HepG2 (cell line): ENCODE measurements at regions of chr6 and their contacts with region 1.

Region 1: GRCh38 chr6:30717042-30717844 is at the start of gene MDC1:
- DNase-seq: peak; percentile 100
- ATAC-seq: peak; percentile 88
- H3K4me3 ChIP-seq: peak within 1 kb of the TSS; percentile 68 to 84 (median 76)
- H3K27ac ChIP-seq: peak within 1 kb of the TSS; percentile 94
- H3K4me1 ChIP-seq: peaks cover 37% of the 10 kb centered on the region
- H3K27me3 ChIP-seq: no peaks in the 10 kb centered on the region; a peak in 1 of 5 replicates
- CTCF ChIP-seq: peak; percentile 69
- EP300 ChIP-seq: peak; percentile 77 to 82; a peak in 3 of 4 replicates
- POLR2A ChIP-seq: peak; percentile 91 to 96
- RAD21 ChIP-seq: peak; percentile 39; the same call in 1 of the 2 replicates
- total RNA-seq, gene MDC1: 8.4 and 20.5 TPM in 2 replicates

Region 2: DNA sequence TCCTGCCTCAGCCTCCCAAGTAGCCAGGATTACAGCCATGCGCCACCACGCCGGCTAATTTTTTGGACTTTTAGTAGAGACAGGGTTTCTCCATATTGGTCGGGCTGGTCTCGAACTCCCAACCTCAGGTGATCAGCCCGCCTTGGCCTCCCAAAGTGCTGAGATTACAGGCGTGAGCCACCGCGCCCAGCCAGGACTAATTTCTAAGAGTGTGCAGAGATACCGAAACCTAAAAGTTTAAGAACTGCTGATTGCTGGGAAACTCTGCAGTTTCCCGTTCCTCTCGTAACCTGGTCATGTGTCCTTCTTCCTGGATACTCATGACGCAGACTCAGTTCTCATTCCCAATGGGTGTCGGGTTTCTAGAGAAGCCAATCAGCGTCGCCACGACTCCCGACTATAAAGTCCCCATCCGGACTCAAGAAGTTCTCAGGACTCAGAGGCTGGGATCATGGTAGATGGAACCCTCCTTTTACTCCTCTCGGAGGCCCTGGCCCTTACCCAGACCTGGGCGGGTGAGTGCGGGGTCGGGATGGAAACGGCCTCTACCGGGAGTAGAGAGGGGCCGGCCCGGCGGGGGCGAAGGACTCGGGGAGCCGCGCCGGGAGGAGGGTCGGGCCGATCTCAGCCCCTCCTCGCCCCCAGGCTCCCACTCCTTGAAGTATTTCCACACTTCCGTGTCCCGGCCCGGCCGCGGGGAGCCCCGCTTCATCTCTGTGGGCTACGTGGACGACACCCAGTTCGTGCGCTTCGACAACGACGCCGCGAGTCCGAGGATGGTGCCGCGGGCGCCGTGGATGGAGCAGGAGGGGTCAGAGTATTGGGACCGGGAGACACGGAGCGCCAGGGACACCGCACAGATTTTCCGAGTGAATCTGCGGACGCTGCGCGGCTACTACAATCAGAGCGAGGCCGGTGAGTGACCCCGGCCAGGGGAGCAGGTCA is 227.9 kb before region 1 on chr6 and contains the start of gene HLA-E:
- CTCF ChIA-PET with region 1: no interaction called
- POLR2A ChIA-PET with region 1: no interaction called
- in situ Hi-C with region 1: loop called (anchors 10 kb)
- intact Hi-C with region 1: loop called (anchors 5 kb)
- DNase-seq: peak; percentile 99
- ATAC-seq: peak; percentile 97
- H3K4me3 ChIP-seq: peak within 1 kb of the TSS; percentile 74 to 97 (median 80)
- H3K27ac ChIP-seq: peak within 1 kb of the TSS; percentile 41
- H3K4me1 ChIP-seq: peaks cover 25% of the 10 kb centered on the region
- H3K27me3 ChIP-seq: no peaks in the 10 kb centered on the region
- CTCF ChIP-seq: peak; percentile 13; the same call in 1 of the 2 replicates
- EP300 ChIP-seq: no peak
- POLR2A ChIP-seq: peak; percentile 93 to 97
- RAD21 ChIP-seq: 0 out of 2 replicates have a peak, but pooled peaks have one; percentile 10
- total RNA-seq, gene HLA-E: 21.2 and 45.2 TPM in 2 replicates

Region 3: GRCh38 chr6:30616811-30617564 is 100.3 kb before region 1 on chr6 and contains the start of gene PPP1R10:
- CTCF ChIA-PET with region 1: no interaction called
- POLR2A ChIA-PET with region 1: interaction called, 25 read pairs
- in situ Hi-C with region 1: no loop called
- intact Hi-C with region 1: loop called (anchors 2 kb)
- DNase-seq: peak; percentile 100
- ATAC-seq: peak; percentile 83
- H3K4me3 ChIP-seq: peak within 1 kb of the TSS; percentile 87 to 97 (median 89)
- H3K27ac ChIP-seq: peak within 1 kb of the TSS; percentile 98
- H3K4me1 ChIP-seq: peaks cover 35% of the 10 kb centered on the region
- H3K27me3 ChIP-seq: no peaks in the 10 kb centered on the region; a peak in 1 of 5 replicates
- CTCF ChIP-seq: no peak
- EP300 ChIP-seq: no peak; a peak in 1 of 4 replicates
- POLR2A ChIP-seq: peak; percentile 98 to 100
- RAD21 ChIP-seq: no peak; the same call in 1 of the 2 replicates
- total RNA-seq, gene PPP1R10: 19.5 and 38.4 TPM in 2 replicates

Region 4: GRCh38 chr6:30678964-30679726 is 38.1 kb before region 1 on chr6:
- CTCF ChIA-PET with region 1: interaction called, 130 read pairs
- POLR2A ChIA-PET with region 1: interaction called, 92 read pairs
- in situ Hi-C with region 1: loop called (anchors 5 kb)
- intact Hi-C with region 1: loop called (anchors 1 kb)
- DNase-seq: peak; percentile 83
- ATAC-seq: peak; percentile 93
- H3K4me3 ChIP-seq: peak overlapping the region; percentile 43 to 66 (median 44)
- H3K27ac ChIP-seq: peak overlapping the region; percentile 32
- H3K4me1 ChIP-seq: peaks cover 41% of the 10 kb centered on the region
- H3K27me3 ChIP-seq: no peaks in the 10 kb centered on the region
- CTCF ChIP-seq: peak; percentile 100
- EP300 ChIP-seq: 0 out of 4 replicates have a peak, but pooled peaks of 1 of the 2 experiments have one; percentile 35
- POLR2A ChIP-seq: no peak
- RAD21 ChIP-seq: peak; percentile 99

Region 5: DNA sequence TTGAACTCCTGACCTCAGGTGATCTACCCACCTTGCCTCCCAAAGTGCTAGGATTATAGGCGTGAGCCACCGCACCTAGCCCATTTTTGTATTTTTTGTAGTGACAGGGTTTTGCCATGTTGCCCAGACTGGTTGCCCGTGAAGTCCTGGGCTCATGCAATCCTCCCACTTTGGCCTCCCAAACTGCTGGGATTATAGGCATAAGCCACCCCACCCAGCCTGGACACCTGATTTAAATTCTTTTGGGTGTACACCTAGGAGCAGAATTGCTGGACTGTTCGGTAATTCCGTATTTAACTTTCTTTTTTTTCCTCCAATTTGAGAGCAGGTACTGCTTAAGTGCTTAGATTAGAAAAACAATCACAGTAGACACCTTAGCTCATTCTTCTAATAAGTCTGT is 20.8 kb before region 1 on chr6:
- CTCF ChIA-PET with region 1: interaction called, 3 read pairs
- POLR2A ChIA-PET with region 1: interaction called, 50 read pairs
- in situ Hi-C with region 1: no loop called
- intact Hi-C with region 1: loop called (anchors 1 kb)
- DNase-seq: no peak
- ATAC-seq: no peak
- H3K4me3 ChIP-seq: no peak overlapping the region
- H3K27ac ChIP-seq: no peak overlapping the region
- H3K4me1 ChIP-seq: peaks cover 38% of the 10 kb centered on the region
- H3K27me3 ChIP-seq: no peaks in the 10 kb centered on the region
- CTCF ChIP-seq: no peak
- EP300 ChIP-seq: no peak
- POLR2A ChIP-seq: no peak
- RAD21 ChIP-seq: no peak

Region 6: GRCh38 chr6:30759575-30760239 is 42.5 kb after region 1 on chr6:
- CTCF ChIA-PET with region 1: no interaction called
- POLR2A ChIA-PET with region 1: interaction called, 12 read pairs
- in situ Hi-C with region 1: no loop called
- intact Hi-C with region 1: no loop called
- DNase-seq: peak; percentile 97
- ATAC-seq: peak; percentile 66
- H3K4me3 ChIP-seq: peak overlapping the region in 1 of 3 experiments; percentile 13; a peak in 1 of 6 replicates
- H3K27ac ChIP-seq: peak overlapping the region; percentile 80
- H3K4me1 ChIP-seq: peaks cover 81% of the 10 kb centered on the region
- H3K27me3 ChIP-seq: no peaks in the 10 kb centered on the region
- CTCF ChIP-seq: no peak
- EP300 ChIP-seq: peak; percentile 64 to 65; a peak in 3 of 4 replicates
- POLR2A ChIP-seq: no peak
- RAD21 ChIP-seq: no peak

Region 7: DNA sequence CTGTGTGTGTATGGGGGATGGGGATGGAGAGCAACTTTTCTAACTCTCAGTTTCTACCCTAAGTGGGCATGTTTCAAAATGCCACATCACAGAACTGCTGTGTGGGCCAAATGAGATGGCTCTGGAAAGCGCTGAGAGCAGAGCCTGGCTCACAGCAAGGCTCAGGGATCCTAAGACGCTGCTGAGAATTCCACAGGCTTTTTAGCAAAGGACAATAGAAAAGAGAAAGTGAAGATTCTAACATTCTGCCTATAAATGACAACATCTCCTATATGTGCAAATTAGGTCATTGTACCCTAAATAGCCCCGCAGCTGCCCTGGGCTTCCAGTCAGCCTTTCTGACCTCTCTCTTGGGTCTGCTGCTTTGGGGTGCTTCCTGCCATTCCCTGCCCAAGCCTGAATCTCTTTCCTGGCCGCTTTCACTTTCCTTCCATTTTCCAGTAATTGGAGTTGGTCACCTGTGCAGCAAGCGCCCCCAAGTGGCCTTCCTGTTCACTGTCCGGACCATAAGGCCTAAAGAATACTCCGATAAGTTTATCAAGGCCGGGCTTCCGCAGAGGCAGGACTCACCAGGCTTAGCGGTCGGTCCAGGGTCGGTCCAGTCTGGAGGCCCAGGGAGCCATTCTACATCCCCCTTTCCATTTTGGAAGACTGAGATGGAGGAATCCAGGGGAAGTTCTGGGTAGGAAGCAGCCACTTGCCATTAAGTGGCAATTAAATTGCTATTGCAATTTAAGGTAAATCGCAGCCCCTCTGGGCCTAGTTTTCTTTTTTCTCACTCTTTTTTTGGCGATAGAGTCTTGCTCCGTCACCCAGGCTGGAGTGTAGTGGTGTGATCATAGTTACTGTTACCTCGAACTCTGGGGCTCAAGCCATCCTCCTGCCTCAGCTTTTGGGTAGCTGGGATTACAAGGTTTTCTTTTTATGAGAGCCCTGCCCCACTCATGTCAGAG is 160.5 kb after region 1 on chr6:
- CTCF ChIA-PET with region 1: interaction called, 5 read pairs
- POLR2A ChIA-PET with region 1: interaction called, 4 read pairs
- in situ Hi-C with region 1: no loop called
- intact Hi-C with region 1: loop called (anchors 5 kb)
- DNase-seq: peak; percentile 91
- ATAC-seq: peak; percentile 84
- H3K4me3 ChIP-seq: peak overlapping the region; percentile 48 to 69 (median 49)
- H3K27ac ChIP-seq: no peak overlapping the region
- H3K4me1 ChIP-seq: peaks cover 48% of the 10 kb centered on the region
- H3K27me3 ChIP-seq: peaks cover 6 to 34% of the 10 kb centered on the region in 2 experiments
- CTCF ChIP-seq: peak; percentile 99
- EP300 ChIP-seq: peak in 1 of 2 experiments; percentile 28; a peak in 1 of 4 replicates
- POLR2A ChIP-seq: no peak
- RAD21 ChIP-seq: peak; percentile 97

Region 8: DNA sequence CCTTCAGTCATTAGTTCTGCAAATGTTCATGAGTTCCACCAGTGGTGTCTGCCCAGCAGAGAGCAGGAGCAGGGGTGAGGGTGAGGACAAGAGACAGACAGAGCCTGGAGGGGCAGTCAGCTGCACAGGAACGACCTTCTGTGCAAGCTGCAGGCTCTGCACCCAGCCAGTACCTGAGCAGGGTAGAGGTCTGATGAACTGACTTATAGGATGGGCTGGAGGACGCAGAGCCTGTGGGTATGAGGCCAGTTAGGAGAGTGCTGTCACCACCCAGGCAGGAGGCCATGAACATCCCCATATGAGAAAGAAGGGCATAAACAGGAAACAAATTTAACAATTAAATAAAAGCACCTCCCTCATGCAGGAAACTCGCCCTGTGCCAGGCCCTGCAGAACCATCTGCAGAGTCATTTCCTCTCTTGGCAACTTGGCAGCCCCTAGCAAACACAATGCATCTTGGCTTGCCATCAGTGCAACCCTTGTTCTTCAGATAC is 377.2 kb after region 1 on chr6:
- CTCF ChIA-PET with region 1: no interaction called
- POLR2A ChIA-PET with region 1: no interaction called
- in situ Hi-C with region 1: no loop called
- intact Hi-C with region 1: no loop called
- DNase-seq: no peak
- ATAC-seq: peak; percentile 70
- H3K4me3 ChIP-seq: no peak overlapping the region
- H3K27ac ChIP-seq: no peak overlapping the region
- H3K4me1 ChIP-seq: peaks cover 56% of the 10 kb centered on the region
- H3K27me3 ChIP-seq: no peaks in the 10 kb centered on the region
- CTCF ChIP-seq: no peak
- EP300 ChIP-seq: no peak
- POLR2A ChIP-seq: no peak
- RAD21 ChIP-seq: no peak

Region 9: GRCh38 chr6:31332637-31333602 is 615.7 kb after region 1 on chr6:
- CTCF ChIA-PET with region 1: no interaction called
- POLR2A ChIA-PET with region 1: no interaction called
- in situ Hi-C with region 1: no loop called
- intact Hi-C with region 1: no loop called
- DNase-seq: no peak
- ATAC-seq: no peak
- H3K4me3 ChIP-seq: no peak overlapping the region
- H3K27ac ChIP-seq: no peak overlapping the region
- H3K4me1 ChIP-seq: no peaks in the 10 kb centered on the region
- H3K27me3 ChIP-seq: no peaks in the 10 kb centered on the region
- CTCF ChIP-seq: no peak
- EP300 ChIP-seq: no peak
- POLR2A ChIP-seq: no peak
- RAD21 ChIP-seq: no peak